ENCODE measurements at regions of chr3 and their contacts with region 1.

Region 1: GRCh38 chr3:138694287-138695007 is 85.9 kb downstream of the FAIM start:
- DNase-seq: no peak
- H3K4me3 ChIP-seq: no peak overlapping the region
- H3K4me3 Mint-ChIP-seq: no peak overlapping the region
- H3K27ac ChIP-seq: no peak overlapping the region
- H3K27ac Mint-ChIP-seq: peak overlapping the region in 2 of 7 donors; percentile 61 to 70
- H3K4me1 ChIP-seq: no peaks in the 10 kb centered on the region
- H3K4me1 Mint-ChIP-seq: no peaks in the 10 kb centered on the region
- H3K27me3 ChIP-seq: no peaks in the 10 kb centered on the region
- H3K27me3 Mint-ChIP-seq: no peaks in the 10 kb centered on the region
- CTCF ChIP-seq: no peak

Region 2: DNA sequence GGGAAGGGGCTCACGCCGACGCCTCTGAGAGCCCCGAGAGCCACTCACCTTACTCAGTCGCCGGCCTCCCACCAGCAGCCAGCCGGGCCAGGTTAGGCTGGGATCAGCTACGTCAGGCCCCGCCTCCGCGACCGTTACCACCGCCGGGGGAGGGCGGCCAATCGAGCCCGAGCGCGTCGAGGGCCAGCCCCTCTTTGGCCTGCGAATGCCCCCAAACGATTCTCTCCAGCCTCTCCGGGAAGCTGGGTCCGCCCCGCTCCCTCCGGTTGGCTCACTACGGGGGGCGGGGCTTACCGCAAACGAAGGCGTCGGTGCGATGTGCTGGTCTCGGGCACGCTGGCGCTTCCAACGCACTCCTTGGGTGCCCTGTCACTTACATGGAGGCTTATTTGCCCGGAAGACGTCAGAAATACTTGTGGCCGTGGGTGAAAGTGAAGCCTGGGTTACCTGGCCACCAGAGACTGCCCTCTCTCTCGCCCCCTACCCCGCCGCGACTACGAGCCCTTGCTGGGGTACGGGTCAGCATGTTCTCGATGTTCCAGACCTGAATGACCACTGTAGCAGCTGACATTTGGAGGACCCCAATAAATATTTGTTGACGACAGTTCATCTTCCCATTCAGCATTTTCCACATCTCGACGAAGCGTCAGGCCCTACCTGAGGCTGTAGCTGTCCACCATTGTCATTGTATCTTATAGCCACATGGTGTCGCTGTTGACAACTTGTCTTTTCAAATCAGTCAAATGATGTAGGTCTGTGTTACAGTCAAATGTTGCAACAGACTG is 100.1 kb before region 1 on chr3 and contains the start of gene CEP70:
- intact Hi-C with region 1: loop called in 1 of 2 experiments (anchors 10 kb)
- DNase-seq: peak; percentile 83 to 91 (median 90)
- H3K4me3 ChIP-seq: peak within 1 kb of the TSS; percentile 64 to 80 (median 64)
- H3K4me3 Mint-ChIP-seq: peak within 1 kb of the TSS; percentile 95 to 97
- H3K27ac ChIP-seq: peak within 1 kb of the TSS in 1 of 2 donors; percentile 7
- H3K27ac Mint-ChIP-seq: peak within 1 kb of the TSS; percentile 80 to 95 (median 86)
- H3K4me1 ChIP-seq: peaks cover 12 to 19% of the 10 kb centered on the region in 2 donors
- H3K4me1 Mint-ChIP-seq: peaks cover 14% of the 10 kb centered on the region
- H3K27me3 ChIP-seq: peaks cover 0 to 5% of the 10 kb centered on the region in 2 donors
- H3K27me3 Mint-ChIP-seq: peaks cover 0 to 14% (median 6%) of the 10 kb centered on the region in 3 donors
- CTCF ChIP-seq: peak; percentile 98
- polyA plus RNA-seq, gene CEP70: 0.11 TPM in 1 of 3 donors, not detected in the others

Region 3: DNA sequence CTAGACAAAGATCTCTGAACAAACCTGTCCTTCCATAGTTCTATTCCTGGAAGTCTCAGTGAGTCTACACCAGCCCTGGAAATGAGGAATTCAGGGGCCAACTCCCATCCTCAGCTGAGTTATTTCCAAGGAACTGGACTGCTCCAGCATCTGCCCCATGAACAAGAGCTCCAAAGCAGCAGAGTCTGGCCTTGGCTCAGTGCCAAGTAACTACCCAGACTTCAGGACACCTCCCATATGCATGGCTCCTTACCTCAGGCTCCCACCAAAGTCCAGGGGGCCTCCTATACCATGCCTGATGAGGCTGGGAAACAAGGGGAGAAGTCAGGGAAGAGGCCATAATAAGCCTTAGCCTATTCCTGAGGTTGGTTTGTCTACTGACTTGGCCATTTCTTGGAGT is 40.9 kb before region 1 on chr3:
- intact Hi-C with region 1: no loop called
- DNase-seq: no peak
- H3K4me3 ChIP-seq: no peak overlapping the region
- H3K4me3 Mint-ChIP-seq: no peak overlapping the region
- H3K27ac ChIP-seq: no peak overlapping the region
- H3K27ac Mint-ChIP-seq: peak overlapping the region in 1 of 7 donors; percentile 26
- H3K4me1 ChIP-seq: no peaks in the 10 kb centered on the region
- H3K4me1 Mint-ChIP-seq: no peaks in the 10 kb centered on the region
- H3K27me3 ChIP-seq: no peaks in the 10 kb centered on the region
- H3K27me3 Mint-ChIP-seq: peaks cover 0 to 2% (median 0%) of the 10 kb centered on the region in 3 donors
- CTCF ChIP-seq: no peak

Region 4: GRCh38 chr3:138681463-138682220 is 12.8 kb before region 1 on chr3:
- intact Hi-C with region 1: no loop called
- DNase-seq: no peak
- H3K4me3 ChIP-seq: no peak overlapping the region
- H3K4me3 Mint-ChIP-seq: no peak overlapping the region
- H3K27ac ChIP-seq: no peak overlapping the region
- H3K27ac Mint-ChIP-seq: no peak overlapping the region
- H3K4me1 ChIP-seq: no peaks in the 10 kb centered on the region
- H3K4me1 Mint-ChIP-seq: no peaks in the 10 kb centered on the region
- H3K27me3 ChIP-seq: no peaks in the 10 kb centered on the region
- H3K27me3 Mint-ChIP-seq: no peaks in the 10 kb centered on the region
- CTCF ChIP-seq: no peak

Region 5: GRCh38 chr3:139032326-139033002 is 338.0 kb after region 1 on chr3:
- intact Hi-C with region 1: no loop called
- DNase-seq: no peak
- H3K4me3 ChIP-seq: no peak overlapping the region
- H3K4me3 Mint-ChIP-seq: no peak overlapping the region
- H3K27ac ChIP-seq: no peak overlapping the region
- H3K27ac Mint-ChIP-seq: no peak overlapping the region
- H3K4me1 ChIP-seq: no peaks in the 10 kb centered on the region
- H3K4me1 Mint-ChIP-seq: no peaks in the 10 kb centered on the region
- H3K27me3 ChIP-seq: no peaks in the 10 kb centered on the region
- H3K27me3 Mint-ChIP-seq: peaks cover 1 to 6% (median 5%) of the 10 kb centered on the region in 3 donors
- CTCF ChIP-seq: no peak

Measured in CD14-positive monocyte (primary cell).